Posterior vena cava (tissue), 2 donors: ENCODE measurements at regions of chr13 and their contacts with region 1.

Region 1: GRCh38 chr13:110421696-110422385 is 114.8 kb downstream of the COL4A2 start:
- DNase-seq: no peak

Region 2: DNA sequence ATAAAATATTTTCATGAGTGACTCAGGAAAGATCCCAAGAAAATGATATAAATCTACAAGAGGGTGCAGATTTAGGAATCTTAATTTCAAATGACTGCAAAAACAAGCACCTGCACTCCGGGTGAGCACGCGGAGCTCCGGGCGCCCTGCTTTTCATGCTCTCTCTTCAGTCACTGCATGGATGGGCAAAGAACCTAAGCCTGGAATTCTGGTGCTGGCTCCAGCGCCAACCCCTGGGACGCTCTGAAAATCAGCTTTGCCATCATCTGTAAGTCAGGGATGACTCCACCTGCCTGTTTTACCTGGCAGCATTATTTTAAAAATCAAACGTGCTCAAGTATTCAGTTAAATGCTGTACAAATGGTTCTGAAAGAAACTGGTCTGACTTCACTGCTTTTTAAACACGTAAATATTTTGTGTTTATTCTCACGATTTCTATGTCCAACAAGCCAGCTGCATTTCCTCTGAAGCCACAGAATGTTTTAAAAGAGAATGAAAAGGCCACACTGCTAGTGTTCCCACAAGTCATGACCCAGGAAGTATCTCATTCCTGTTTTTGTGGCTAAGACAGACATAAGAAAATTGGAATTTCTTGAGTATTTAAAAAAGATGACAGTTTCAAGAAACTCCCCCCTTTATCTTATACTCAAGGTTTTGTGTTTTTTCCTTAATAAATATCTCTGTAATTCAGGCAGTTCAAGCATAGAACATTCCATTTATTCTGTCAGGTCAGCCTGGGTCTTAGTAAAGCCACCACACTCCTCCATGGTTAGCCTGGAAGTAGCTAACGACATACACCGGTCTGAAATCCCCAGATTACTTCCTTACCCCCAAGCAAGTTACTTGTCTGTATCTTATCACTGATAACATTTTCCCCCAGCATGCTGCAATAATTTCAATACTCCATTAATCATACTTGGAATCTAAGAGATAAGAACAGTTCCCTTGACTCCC is 196.0 kb before region 1 on chr13:
- intact Hi-C with region 1: loop called (anchors 5 to 10 kb)
- DNase-seq: no peak

Region 3: DNA sequence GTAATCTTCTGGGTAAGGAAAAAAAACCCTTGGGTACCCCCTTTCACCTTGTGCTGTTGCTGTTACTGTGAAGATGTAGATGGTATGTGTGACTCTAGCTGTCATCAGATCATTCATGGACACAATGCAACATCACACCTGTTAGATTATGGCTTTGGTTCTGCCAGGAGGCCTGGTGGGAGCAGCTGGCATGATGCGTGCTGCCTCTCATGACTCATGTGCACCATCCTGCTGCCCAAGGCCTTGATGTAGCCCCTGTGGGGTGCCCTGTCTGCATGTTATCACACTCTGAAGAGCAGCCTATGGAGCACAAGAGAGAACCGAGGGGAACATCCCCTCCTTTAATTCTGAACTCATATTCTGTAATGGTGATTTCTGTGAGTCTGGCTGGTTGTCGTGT is 840.9 kb after region 1 on chr13:
- intact Hi-C with region 1: no loop called
- DNase-seq: no peak